Adrenal gland (tissue), 19 donors: ENCODE measurements at regions of chr19 and their contacts with region 1.

Region 1: DNA sequence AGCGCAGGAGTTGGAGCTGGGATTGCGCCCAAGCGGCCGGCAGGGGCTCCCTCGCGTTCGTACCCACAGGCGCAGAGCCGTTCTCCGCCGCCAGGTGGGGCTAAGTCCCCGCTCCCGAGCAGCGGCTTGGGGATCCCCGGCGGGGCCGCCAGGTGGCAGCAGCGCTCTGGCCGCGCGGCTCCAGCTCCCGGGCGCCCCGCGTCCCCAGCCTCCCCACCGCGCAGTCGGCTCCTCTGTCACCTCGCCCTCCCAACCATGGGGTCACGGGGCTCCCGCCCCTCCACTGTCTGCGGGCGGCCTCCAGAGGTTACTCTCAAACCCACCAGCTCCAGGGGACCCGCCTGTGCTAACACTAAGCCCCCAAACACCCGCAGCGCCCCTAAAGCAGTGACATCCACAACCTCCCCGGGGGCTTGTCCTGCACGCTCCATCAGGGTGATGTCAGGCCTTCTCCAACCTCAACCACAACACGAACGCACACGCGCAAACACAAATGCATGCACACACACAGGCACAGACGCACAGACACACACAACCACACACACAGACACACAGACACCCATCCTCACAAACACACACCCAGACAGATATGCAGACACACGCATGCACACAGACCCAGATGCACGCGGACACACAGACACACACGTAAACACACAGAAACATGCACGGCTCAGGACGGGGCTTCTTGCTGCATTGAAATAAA is 18.4 kb upstream of the KCTD15 start:
- DNase-seq: peak; percentile 69 to 86 (median 81)
- H3K4me3 ChIP-seq: no peak overlapping the region
- H3K27ac ChIP-seq: no peak overlapping the region
- H3K4me1 ChIP-seq: no peaks in the 10 kb centered on the region
- H3K27me3 ChIP-seq: no peaks in the 10 kb centered on the region
- CTCF ChIP-seq: peak; percentile 96 to 100 (median 100)
- POLR2A ChIP-seq: peak in 1 of 2 donors; percentile 43

Region 2: DNA sequence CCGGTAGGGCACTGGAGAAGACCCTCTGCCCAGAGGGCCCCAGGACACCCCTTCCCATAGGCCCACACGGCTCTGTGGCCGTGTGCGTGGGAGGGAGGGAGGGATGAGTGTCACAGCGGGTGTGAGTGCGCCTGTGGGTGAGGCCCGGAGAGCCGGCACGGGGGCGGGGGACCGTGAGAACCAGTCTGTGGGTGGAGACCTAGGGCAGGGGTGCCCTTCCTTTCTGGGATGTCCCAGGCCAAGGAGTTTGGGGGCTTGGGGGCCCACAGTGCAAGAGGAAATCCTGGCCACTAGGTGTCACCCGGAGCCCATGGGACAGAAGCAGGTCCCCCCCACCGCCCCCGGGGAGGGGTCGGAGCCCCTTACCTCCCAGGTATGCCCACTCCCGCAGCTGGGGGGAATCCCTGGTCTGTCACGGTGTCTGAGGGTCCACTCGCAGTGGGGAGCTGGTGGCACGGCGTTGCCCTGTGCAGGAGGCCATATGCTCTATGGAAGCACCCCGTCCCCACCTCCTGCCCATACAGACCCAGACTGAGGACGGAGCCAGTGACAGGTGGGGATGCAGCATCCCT is 536.6 kb before region 1 on chr19:
- intact Hi-C with region 1: loop called in 1 of 2 experiments (anchors 10 kb)
- DNase-seq: peak in 1 of 7 donors; percentile 38
- H3K4me3 ChIP-seq: no peak overlapping the region
- H3K27ac ChIP-seq: no peak overlapping the region
- H3K4me1 ChIP-seq: no peaks in the 10 kb centered on the region
- H3K27me3 ChIP-seq: no peaks in the 10 kb centered on the region
- CTCF ChIP-seq: peak; percentile 29 to 82 (median 69)
- POLR2A ChIP-seq: no peak

Region 3: DNA sequence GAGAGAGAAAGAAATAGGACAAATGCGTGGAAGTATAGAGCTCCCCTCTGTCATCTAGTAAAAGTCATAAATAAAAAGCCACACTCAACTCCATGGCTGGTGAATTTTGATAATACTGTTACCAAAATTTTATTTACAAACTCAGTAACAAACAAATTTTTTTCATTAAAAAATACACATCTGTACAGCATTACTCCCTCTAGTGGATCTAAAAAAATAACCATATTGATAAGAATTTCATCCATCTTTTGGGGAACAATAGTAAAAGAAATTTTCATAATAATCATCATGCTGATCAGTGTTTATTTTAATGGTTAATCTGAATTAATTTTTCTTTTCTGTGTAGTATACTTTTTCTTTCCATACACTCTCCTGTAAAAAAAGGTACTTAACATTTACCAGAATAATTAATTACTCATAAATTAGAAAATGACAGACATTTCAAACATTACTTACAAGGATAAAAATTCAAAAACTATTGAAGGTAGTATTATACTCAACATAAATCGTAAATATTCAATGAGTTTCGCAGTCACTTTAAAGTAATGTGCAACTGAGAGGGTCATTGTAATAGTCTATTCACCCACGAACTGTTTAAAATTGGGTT is 220.6 kb after region 1 on chr19:
- intact Hi-C with region 1: loop called in 1 of 2 experiments (anchors 5 kb)
- DNase-seq: no peak
- H3K4me3 ChIP-seq: no peak overlapping the region
- H3K27ac ChIP-seq: no peak overlapping the region
- H3K4me1 ChIP-seq: no peaks in the 10 kb centered on the region
- H3K27me3 ChIP-seq: no peaks in the 10 kb centered on the region
- CTCF ChIP-seq: peak; percentile 24 to 60 (median 41)
- POLR2A ChIP-seq: no peak

Region 4: GRCh38 chr19:34096020-34096915 is 318.0 kb after region 1 on chr19:
- intact Hi-C with region 1: loop called in 1 of 2 experiments (anchors 5 kb)
- DNase-seq: peak in 1 of 7 donors; percentile 39
- H3K4me3 ChIP-seq: no peak overlapping the region
- H3K27ac ChIP-seq: no peak overlapping the region
- H3K4me1 ChIP-seq: no peaks in the 10 kb centered on the region
- H3K27me3 ChIP-seq: no peaks in the 10 kb centered on the region
- CTCF ChIP-seq: peak; percentile 38 to 66 (median 53)
- POLR2A ChIP-seq: no peak

Region 5: GRCh38 chr19:34145741-34146202 is 367.5 kb after region 1 on chr19:
- intact Hi-C with region 1: loop called in 1 of 2 experiments (anchors 5 kb)
- DNase-seq: peak in 6 of 7 donors; percentile 24 to 72 (median 49)
- H3K4me3 ChIP-seq: no peak overlapping the region
- H3K27ac ChIP-seq: no peak overlapping the region
- H3K4me1 ChIP-seq: no peaks in the 10 kb centered on the region
- H3K27me3 ChIP-seq: no peaks in the 10 kb centered on the region
- CTCF ChIP-seq: peak; percentile 56 to 83 (median 78)
- POLR2A ChIP-seq: no peak